Naive thymus-derived CD4-positive, alpha-beta T cell (primary cell): ENCODE measurements at regions of chr1 and their contacts with region 1.

Region 1: DNA sequence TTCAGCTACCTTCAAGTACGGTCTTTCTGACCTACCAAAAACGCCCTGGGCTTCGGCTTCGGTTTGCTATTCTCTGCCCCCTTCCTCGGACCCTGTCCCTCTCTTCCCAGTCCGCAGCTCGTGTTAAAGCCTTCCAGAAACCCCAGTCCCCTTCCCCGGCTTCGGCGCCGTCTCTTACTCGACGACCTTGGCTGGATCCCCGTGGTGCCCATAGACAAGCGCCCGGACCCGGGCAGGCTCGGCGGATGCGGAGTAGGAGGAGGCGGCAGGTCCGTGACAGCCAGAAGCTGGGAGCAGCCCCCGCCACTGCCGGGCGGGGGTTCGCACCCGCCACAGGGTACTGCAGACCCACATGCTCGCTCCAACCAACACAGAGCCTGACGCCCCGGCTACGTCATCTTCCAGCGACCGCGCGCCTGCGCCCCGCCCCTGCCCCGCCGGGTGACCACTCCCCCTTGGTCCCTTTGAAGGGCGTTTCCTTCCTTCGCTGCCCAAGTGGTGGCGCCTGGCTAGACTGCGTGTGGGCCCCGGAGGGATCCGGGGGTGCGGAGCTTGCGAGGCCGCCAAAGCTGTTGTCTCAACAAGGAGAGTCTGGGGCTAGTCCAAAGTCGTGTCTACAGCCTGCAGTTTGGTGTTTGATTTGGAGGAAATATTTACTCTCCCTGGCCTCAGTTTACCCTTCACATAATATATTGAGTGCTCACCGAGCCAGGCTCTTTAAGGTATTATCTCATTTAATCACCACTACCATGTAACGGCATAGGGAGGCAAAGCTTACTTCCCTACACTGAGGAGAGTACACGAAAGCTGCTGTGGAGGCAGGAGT is at the start of gene MECR:
- DNase-seq: peak; percentile 89 to 98 (median 92)
- ATAC-seq: peak; percentile 100
- H3K4me3 ChIP-seq: peak within 1 kb of the TSS; percentile 65
- H3K4me3 Mint-ChIP-seq: peak within 1 kb of the TSS; percentile 87 to 97 (median 92)
- H3K27ac ChIP-seq: peak within 1 kb of the TSS; percentile 76
- H3K27ac Mint-ChIP-seq: peak within 1 kb of the TSS; percentile 80 to 97 (median 93)
- H3K4me1 ChIP-seq: peaks cover 7 to 13% of the 10 kb centered on the region in 2 donors
- H3K4me1 Mint-ChIP-seq: peaks cover 12 to 26% (median 21%) of the 10 kb centered on the region in 7 donors
- H3K27me3 ChIP-seq: peaks cover 0 to 1% of the 10 kb centered on the region in 2 donors
- H3K27me3 Mint-ChIP-seq: peaks cover 0 to 26% (median 11%) of the 10 kb centered on the region in 5 donors
- total RNA-seq, gene MECR: 8.6 to 24.4 (median 16.8) TPM

Region 2: GRCh38 chr1:29453502-29454240 is 222.9 kb after region 1 on chr1:
- CTCF ChIA-PET with region 1: no interaction called
- POLR2A ChIA-PET with region 1: no interaction called
- intact Hi-C with region 1: loop called in 1 of 2 experiments (anchors 10 kb)
- DNase-seq: peak in 1 of 9 donors; percentile 5
- ATAC-seq: no peak
- H3K4me3 ChIP-seq: no peak overlapping the region
- H3K4me3 Mint-ChIP-seq: no peak overlapping the region
- H3K27ac ChIP-seq: no peak overlapping the region
- H3K27ac Mint-ChIP-seq: no peak overlapping the region
- H3K4me1 ChIP-seq: no peaks in the 10 kb centered on the region
- H3K4me1 Mint-ChIP-seq: no peaks in the 10 kb centered on the region
- H3K27me3 ChIP-seq: no peaks in the 10 kb centered on the region
- H3K27me3 Mint-ChIP-seq: peaks cover 0 to 40% (median 7%) of the 10 kb centered on the region in 5 donors

Region 3: DNA sequence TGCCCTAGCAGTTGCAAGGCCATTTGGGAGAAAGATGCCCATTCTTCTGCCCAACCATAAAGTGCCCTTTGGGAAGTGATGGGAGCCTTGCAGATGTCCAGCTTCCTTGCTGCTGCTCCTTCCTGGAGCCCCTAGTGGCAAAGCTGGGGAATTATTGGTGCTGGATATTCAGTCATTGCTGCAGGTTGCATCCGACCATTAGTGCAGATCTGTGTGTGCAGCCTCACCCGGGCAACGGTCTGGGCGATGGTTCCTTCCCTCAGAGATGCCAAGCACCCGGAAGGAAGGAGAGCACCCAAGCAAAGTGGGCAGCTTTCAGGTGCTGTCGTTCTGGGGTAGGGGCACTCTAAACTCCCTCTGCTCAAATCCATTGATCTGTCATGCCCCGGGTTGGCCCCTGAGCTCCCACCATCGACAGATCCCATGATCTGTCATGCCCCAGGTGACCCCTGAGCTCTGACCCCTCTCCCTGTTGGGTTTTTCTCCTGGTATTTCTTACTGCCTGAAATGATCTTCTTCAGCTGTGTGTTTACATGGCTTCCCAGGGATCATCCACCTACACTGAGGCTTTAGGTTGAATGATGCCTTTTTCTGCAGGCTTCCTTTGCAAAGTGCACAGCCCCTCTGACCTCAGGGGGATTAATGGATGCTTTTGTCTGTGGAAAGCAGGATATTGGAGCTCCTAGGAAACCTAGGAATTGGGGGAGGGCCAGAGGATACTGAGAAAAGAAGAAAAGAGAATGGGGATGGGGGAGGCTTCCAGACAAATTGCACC is 473.0 kb after region 1 on chr1:
- CTCF ChIA-PET with region 1: no interaction called
- POLR2A ChIA-PET with region 1: no interaction called
- intact Hi-C with region 1: loop called in 1 of 2 experiments (anchors 10 kb)
- DNase-seq: no peak
- ATAC-seq: no peak
- H3K4me3 ChIP-seq: no peak overlapping the region
- H3K4me3 Mint-ChIP-seq: peak overlapping the region in 1 of 10 donors; percentile 35
- H3K27ac ChIP-seq: no peak overlapping the region
- H3K27ac Mint-ChIP-seq: no peak overlapping the region
- H3K4me1 ChIP-seq: no peaks in the 10 kb centered on the region
- H3K4me1 Mint-ChIP-seq: peaks cover 0 to 15% (median 0%) of the 10 kb centered on the region in 7 donors
- H3K27me3 ChIP-seq: no peaks in the 10 kb centered on the region
- H3K27me3 Mint-ChIP-seq: peaks cover 22 to 71% (median 68%) of the 10 kb centered on the region in 5 donors

Region 4: GRCh38 chr1:30085811-30086770 is 855.3 kb after region 1 on chr1:
- CTCF ChIA-PET with region 1: no interaction called
- POLR2A ChIA-PET with region 1: no interaction called
- intact Hi-C with region 1: loop called in 1 of 2 experiments (anchors 10 kb)
- DNase-seq: peak in 1 of 9 donors; percentile 55
- ATAC-seq: no peak
- H3K4me3 ChIP-seq: no peak overlapping the region
- H3K4me3 Mint-ChIP-seq: peak overlapping the region in 2 of 10 donors; percentile 15 to 20
- H3K27ac ChIP-seq: no peak overlapping the region
- H3K27ac Mint-ChIP-seq: no peak overlapping the region
- H3K4me1 ChIP-seq: no peaks in the 10 kb centered on the region
- H3K4me1 Mint-ChIP-seq: peaks cover 0 to 3% (median 0%) of the 10 kb centered on the region in 7 donors
- H3K27me3 ChIP-seq: peaks cover 0 to 6% of the 10 kb centered on the region in 2 donors
- H3K27me3 Mint-ChIP-seq: peaks cover 5 to 68% (median 47%) of the 10 kb centered on the region in 5 donors

Region 5: DNA sequence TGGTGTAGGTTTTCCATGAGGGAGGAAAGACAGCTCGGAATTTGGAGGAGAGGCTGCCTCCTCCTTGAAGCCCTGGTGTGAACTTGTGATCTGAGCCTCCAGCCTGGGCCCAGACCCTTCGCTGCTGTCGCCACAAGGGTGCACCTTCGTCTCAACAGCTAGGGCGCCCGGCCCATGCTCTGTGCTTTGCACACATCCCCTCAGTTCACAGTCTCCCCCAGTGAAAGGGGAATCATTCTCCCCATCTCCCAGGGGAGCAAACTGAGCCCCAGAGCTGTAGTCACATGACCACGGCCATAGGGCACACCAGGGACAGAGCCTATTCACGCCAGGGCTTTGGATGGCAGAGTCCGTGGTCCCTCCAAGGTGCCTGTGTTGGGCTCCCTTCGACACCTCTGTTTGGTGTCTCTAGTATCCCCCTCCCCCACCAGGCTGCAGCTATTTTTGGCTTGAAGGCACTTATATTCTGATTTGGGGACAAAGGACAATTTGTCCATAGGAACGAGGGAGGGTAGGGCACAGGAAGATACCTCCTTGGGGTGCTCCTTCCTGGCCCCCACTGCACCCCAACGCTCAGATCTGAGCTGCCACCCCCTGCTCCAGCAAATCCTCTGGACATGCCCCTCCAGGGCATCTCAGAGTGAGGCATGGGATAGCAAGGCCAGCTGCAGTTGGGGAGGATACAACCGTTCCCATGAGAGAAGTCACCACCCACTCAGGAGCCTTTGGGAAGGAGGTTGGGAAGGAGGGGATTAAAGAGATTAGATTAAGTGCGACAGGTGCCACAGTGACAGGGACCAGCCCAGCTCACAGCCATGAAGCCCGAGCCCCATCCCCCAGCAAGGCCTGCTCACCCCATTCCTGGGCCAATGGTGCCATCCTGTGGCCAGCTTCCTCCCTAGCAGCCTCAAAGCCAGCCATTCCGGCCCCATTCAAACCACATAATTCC is 1476.9 kb after region 1 on chr1:
- CTCF ChIA-PET with region 1: no interaction called
- POLR2A ChIA-PET with region 1: no interaction called
- intact Hi-C with region 1: loop called in 1 of 2 experiments (anchors 1 kb)
- DNase-seq: peak in 7 of 9 donors; percentile 45 to 68 (median 54)
- ATAC-seq: peak; percentile 82
- H3K4me3 ChIP-seq: no peak overlapping the region
- H3K4me3 Mint-ChIP-seq: no peak overlapping the region
- H3K27ac ChIP-seq: no peak overlapping the region
- H3K27ac Mint-ChIP-seq: peak overlapping the region in 1 of 9 donors; percentile 55
- H3K4me1 ChIP-seq: no peaks in the 10 kb centered on the region
- H3K4me1 Mint-ChIP-seq: peaks cover 0 to 3% (median 0%) of the 10 kb centered on the region in 7 donors
- H3K27me3 ChIP-seq: no peaks in the 10 kb centered on the region
- H3K27me3 Mint-ChIP-seq: peaks cover 0 to 28% (median 6%) of the 10 kb centered on the region in 5 donors

Region 6: GRCh38 chr1:31166462-31166861 is 1935.7 kb after region 1 on chr1:
- CTCF ChIA-PET with region 1: no interaction called
- POLR2A ChIA-PET with region 1: no interaction called
- intact Hi-C with region 1: loop called in 1 of 2 experiments (anchors 10 kb)
- DNase-seq: no peak
- ATAC-seq: no peak
- H3K4me3 ChIP-seq: no peak overlapping the region
- H3K4me3 Mint-ChIP-seq: no peak overlapping the region
- H3K27ac ChIP-seq: no peak overlapping the region
- H3K27ac Mint-ChIP-seq: no peak overlapping the region
- H3K4me1 ChIP-seq: no peaks in the 10 kb centered on the region
- H3K4me1 Mint-ChIP-seq: peaks cover 3 to 17% (median 5%) of the 10 kb centered on the region in 7 donors
- H3K27me3 ChIP-seq: no peaks in the 10 kb centered on the region
- H3K27me3 Mint-ChIP-seq: peaks cover 4 to 10% (median 6%) of the 10 kb centered on the region in 5 donors